ENCODE measurements at regions of chrX and their contacts with region 1.

Region 1: DNA sequence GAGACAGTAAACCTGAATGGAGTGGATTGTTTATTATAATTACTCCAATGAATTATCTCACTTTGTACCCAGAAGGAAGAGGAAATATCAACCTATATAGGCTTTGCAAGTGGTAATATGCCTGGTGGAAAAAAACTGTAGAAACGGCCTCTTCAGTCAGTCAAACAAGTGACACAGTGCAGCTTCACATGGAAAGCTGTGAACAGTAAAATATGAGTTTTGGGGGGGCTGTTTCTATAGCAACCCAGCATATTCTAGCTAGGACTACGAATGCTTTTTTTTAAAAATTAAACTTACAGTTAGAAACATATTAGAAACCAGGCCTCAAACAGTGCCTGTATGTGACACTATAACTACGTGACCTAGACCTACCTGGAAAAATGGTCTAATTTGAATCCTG is 150.1 kb downstream of the PPP1R2C start:
- DNase-seq: no peak
- H3K4me3 ChIP-seq: no peak overlapping the region
- H3K27ac ChIP-seq: no peak overlapping the region
- H3K4me1 ChIP-seq: no peaks in the 10 kb centered on the region
- H3K27me3 ChIP-seq: no peaks in the 10 kb centered on the region
- CTCF ChIP-seq: no peak
- POLR2A ChIP-seq: no peak

Region 2: DNA sequence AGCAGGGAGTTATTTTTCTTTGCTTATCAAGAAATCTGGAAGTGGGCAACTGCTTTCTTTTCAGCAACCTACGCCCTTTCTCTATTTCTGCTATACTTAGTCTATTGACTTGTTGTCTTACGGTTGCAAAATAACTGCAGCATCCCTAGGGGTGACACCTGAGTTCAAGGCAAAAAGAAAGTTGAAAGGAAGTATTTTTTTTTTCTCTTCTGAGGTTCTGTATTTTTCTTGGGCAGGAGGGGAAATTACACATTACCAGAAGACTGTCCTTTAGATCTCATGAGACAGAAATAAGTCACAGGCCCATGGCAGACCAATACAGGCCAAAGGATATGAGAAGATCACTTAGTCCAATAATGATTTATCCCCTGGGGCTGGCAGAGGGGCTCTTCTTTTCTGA is 499.9 kb before region 1 on chrX:
- intact Hi-C with region 1: loop called (anchors 10 kb)
- DNase-seq: no peak
- H3K4me3 ChIP-seq: no peak overlapping the region
- H3K27ac ChIP-seq: no peak overlapping the region
- H3K4me1 ChIP-seq: no peaks in the 10 kb centered on the region
- H3K27me3 ChIP-seq: no peaks in the 10 kb centered on the region
- CTCF ChIP-seq: no peak
- POLR2A ChIP-seq: no peak

Region 3: DNA sequence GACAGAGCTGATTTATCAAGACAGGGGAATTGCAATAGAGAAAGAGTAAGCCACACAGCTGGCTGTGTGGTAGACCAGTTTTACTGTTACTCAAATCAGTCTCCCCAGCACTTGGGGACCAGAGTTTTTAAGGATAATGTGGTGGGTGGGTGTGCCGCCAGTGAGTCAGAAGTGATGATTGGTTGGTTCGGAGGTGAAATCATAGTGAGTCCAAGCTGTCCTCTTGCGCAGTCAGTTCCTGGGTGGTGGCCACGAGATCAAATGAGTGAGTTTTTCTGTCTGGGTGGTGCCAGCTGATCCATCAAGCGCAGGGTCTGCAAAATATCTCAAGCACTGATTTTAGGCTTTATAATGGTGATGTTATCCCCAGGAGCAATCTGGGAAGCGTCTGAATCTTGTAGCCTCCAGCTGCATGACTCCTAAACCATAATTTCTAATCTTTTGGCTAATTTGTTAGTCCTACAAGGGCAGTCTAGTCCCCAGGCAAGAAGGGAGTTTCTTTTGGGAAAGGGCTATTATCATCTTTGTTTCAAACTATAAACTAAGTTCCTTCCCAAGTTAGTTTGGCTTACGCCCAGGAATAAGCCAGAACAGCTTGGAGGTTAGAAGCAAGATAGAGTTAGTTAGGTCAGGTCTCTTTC is 194.0 kb after region 1 on chrX:
- intact Hi-C with region 1: no loop called
- DNase-seq: no peak
- H3K4me3 ChIP-seq: no peak overlapping the region
- H3K27ac ChIP-seq: no peak overlapping the region
- H3K4me1 ChIP-seq: no peaks in the 10 kb centered on the region
- H3K27me3 ChIP-seq: no peaks in the 10 kb centered on the region
- CTCF ChIP-seq: no peak
- POLR2A ChIP-seq: no peak

Measured in uterus (tissue), 4 donors.